ENCODE measurements at regions of chr11 and their contacts with region 1.

Region 1: GRCh38 chr11:115334932-115335788 is 169.1 kb downstream of the CADM1 start:
- DNase-seq: peak; percentile 41
- H3K4me3 ChIP-seq: no peak overlapping the region
- H3K27ac ChIP-seq: no peak overlapping the region
- H3K4me1 ChIP-seq: no peaks in the 10 kb centered on the region
- H3K27me3 ChIP-seq: no peaks in the 10 kb centered on the region
- CTCF ChIP-seq: peak; percentile 29 to 33
- POLR2A ChIP-seq: no peak

Region 2: GRCh38 chr11:115201111-115201792 is 133.9 kb before region 1 on chr11:
- CTCF ChIA-PET with region 1: no interaction called
- POLR2A ChIA-PET with region 1: no interaction called
- dilution Hi-C with region 1: no loop called
- intact Hi-C with region 1: no loop called
- DNase-seq: no peak
- H3K4me3 ChIP-seq: no peak overlapping the region
- H3K27ac ChIP-seq: no peak overlapping the region
- H3K4me1 ChIP-seq: no peaks in the 10 kb centered on the region
- H3K27me3 ChIP-seq: no peaks in the 10 kb centered on the region
- CTCF ChIP-seq: no peak
- POLR2A ChIP-seq: no peak

Region 3: GRCh38 chr11:115324581-115325432 is 10.4 kb before region 1 on chr11:
- CTCF ChIA-PET with region 1: interaction called, 10 read pairs
- POLR2A ChIA-PET with region 1: no interaction called
- dilution Hi-C with region 1: no loop called
- intact Hi-C with region 1: no loop called
- DNase-seq: peak; percentile 14
- H3K4me3 ChIP-seq: no peak overlapping the region
- H3K27ac ChIP-seq: no peak overlapping the region
- H3K4me1 ChIP-seq: no peaks in the 10 kb centered on the region
- H3K27me3 ChIP-seq: no peaks in the 10 kb centered on the region
- CTCF ChIP-seq: peak; percentile 50 to 63
- POLR2A ChIP-seq: no peak

Region 4: DNA sequence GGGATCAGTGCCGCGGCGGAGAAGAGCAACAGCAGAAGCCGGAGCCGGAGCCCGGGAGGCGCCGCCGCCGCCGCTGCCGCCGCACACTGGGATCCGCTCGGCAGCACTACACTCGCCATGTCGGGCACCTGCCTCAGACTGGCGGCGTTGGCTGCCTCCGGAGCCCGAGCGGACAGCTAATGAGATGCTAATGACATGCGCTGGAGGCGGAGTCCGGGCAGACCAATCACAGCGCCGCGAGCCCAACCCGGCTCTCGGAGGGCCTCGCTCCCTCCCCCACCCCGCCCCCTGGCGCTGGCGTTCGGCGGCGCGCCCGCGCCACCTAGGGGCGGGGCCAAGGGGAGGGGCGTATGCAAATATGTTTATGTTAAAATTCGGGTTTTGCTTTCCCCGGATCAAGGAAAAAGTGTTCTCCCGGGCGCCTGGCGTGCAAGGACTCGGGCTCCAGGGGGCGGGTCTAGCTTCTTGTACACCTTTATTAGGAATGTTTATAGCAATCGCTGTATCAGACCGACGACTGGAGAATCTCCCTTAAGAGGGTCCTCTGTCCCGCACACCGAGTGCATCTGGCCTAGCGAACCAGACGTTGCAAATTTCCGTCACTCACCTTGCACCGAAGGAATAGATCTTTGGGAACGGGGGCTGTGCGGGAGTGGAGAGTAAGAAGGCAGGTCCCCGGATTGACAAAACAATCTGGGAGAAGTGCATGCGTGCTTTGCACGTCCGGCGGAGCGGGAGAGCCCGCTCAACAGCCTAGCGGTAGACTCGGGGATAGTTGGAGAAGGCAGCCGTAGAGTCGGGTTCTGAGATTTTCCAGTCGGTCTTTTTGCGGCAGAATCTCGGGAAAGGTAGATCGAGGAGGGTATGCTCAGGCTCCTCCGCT is 169.4 kb after region 1 on chr11 and contains the start of gene CADM1:
- CTCF ChIA-PET with region 1: interaction called, 3 read pairs
- POLR2A ChIA-PET with region 1: no interaction called
- dilution Hi-C with region 1: no loop called
- intact Hi-C with region 1: loop called (anchors 2 kb)
- DNase-seq: peak; percentile 84
- H3K4me3 ChIP-seq: peak within 1 kb of the TSS; percentile 4 to 42 (median 41)
- H3K27ac ChIP-seq: no peak within 1 kb of the TSS
- H3K4me1 ChIP-seq: peaks cover 9% of the 10 kb centered on the region
- H3K27me3 ChIP-seq: peaks cover 16 to 39% of the 10 kb centered on the region in 2 experiments
- CTCF ChIP-seq: peak; percentile 58 to 63
- POLR2A ChIP-seq: no peak
- total RNA-seq, gene CADM1: 2.6 and 2.9 TPM in 2 replicates

Region 5: DNA sequence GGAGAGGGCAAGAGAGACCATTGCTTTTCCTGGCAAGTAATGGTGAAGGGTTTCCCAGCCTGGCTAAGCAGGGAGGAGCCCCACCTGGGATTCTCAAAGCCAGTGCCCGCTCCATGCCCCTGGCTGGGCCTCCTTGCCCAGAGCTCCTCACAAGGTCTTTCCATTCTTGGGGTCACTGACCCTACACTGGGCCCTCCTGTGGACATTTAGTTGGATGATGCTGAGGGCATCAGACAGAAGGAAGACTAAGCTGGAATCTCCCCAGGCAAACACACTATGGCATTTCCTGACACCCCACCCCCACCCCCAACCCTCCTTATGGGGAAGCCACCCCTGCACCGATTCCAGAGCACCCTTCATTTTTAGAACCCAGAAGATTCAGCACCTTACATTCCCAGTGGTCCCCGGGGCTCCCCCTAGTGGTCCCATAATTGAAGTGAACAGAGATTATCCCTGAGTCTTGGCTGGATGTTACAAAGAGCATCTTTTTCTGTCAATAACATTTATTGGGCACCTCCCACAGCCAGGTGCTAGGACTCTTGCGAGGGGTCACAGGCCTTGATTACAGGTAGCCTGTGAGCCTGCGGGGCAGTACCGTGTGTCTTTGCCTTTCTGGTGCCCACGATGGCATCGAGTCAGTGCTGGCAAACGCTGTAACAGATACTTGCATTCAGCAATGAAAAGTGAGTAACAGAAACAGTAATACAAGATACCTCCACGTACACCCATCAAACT is 889.2 kb after region 1 on chr11:
- CTCF ChIA-PET with region 1: interaction called, 7 read pairs
- POLR2A ChIA-PET with region 1: no interaction called
- dilution Hi-C with region 1: no loop called
- intact Hi-C with region 1: loop called (anchors 1 kb)
- DNase-seq: peak; percentile 34
- H3K4me3 ChIP-seq: no peak overlapping the region
- H3K27ac ChIP-seq: no peak overlapping the region
- H3K4me1 ChIP-seq: no peaks in the 10 kb centered on the region
- H3K27me3 ChIP-seq: no peaks in the 10 kb centered on the region
- CTCF ChIP-seq: peak; percentile 58 to 69
- POLR2A ChIP-seq: no peak

Region 6: DNA sequence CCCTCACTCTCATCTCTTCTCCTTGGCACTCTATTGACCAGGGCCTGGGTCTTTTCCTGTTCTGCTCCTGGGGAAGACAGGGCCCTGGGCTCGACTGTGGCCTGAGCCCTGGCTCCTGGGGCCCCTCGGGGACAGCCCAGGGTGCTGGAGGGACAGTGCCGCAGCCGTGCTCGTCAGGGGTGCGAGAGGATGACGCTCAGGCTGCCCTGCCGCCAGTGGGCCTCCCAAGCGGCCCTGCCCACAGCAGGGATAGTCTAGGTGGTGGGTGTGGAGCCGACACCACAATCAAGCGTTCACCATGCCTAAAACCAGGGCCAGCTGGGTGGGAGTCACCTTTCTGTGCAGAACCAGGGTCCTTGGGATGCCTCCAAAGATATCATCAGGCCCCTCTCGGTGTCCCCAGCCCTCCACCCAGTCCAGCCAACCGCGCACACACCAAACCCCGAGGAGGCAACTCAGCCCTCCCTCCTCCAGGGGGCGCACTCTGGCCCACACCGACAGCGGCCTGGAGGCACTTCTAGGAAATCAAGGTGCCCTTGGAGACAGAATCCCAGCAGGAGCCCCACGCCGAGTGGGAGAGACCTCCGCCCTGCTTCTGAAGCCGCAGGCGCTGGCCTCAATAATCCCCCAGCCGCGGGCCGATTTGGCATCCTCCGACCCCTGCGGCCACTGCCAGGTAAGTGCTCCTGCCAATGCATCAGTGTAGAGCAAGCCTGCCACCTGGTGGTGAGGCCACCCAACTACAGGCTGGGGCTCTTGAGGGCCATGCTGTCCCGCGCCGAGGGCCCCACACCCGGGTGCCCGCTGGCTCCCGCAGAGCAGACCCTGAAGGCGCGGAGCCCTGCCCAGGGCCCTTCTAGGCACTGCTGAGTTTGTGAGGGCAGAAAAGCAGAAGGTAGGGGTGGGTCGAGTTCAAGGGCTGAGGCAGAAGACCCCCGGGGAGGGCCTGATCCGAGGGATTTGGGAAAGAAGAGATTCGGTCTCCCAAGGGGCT is 941.2 kb after region 1 on chr11:
- CTCF ChIA-PET with region 1: interaction called, 4 read pairs
- POLR2A ChIA-PET with region 1: no interaction called
- dilution Hi-C with region 1: no loop called
- intact Hi-C with region 1: loop called (anchors 1 kb)
- DNase-seq: peak; percentile 50
- H3K4me3 ChIP-seq: no peak overlapping the region
- H3K27ac ChIP-seq: no peak overlapping the region
- H3K4me1 ChIP-seq: no peaks in the 10 kb centered on the region
- H3K27me3 ChIP-seq: peaks cover 0 to 3% of the 10 kb centered on the region in 2 experiments
- CTCF ChIP-seq: peak; percentile 84 to 95
- POLR2A ChIP-seq: no peak

Measured in endothelial cell of umbilical vein (primary cell).